ENCODE measurements at regions of chr6 and their contacts with region 1.

Region 1: GRCh38 chr6:52653151-52653550 is 17.8 kb upstream of the TMEM14A start:
- DNase-seq: no peak
- H3K4me3 ChIP-seq: no peak overlapping the region
- H3K4me3 Mint-ChIP-seq: no peak overlapping the region
- H3K27ac ChIP-seq: no peak overlapping the region
- H3K27ac Mint-ChIP-seq: peak overlapping the region in 1 of 7 donors; percentile 53
- H3K4me1 ChIP-seq: no peaks in the 10 kb centered on the region
- H3K4me1 Mint-ChIP-seq: peaks cover 3 to 9% (median 4%) of the 10 kb centered on the region in 4 donors
- H3K27me3 ChIP-seq: peaks cover 6% of the 10 kb centered on the region
- H3K27me3 Mint-ChIP-seq: peaks cover 15 to 18% of the 10 kb centered on the region in 2 donors

Region 2: DNA sequence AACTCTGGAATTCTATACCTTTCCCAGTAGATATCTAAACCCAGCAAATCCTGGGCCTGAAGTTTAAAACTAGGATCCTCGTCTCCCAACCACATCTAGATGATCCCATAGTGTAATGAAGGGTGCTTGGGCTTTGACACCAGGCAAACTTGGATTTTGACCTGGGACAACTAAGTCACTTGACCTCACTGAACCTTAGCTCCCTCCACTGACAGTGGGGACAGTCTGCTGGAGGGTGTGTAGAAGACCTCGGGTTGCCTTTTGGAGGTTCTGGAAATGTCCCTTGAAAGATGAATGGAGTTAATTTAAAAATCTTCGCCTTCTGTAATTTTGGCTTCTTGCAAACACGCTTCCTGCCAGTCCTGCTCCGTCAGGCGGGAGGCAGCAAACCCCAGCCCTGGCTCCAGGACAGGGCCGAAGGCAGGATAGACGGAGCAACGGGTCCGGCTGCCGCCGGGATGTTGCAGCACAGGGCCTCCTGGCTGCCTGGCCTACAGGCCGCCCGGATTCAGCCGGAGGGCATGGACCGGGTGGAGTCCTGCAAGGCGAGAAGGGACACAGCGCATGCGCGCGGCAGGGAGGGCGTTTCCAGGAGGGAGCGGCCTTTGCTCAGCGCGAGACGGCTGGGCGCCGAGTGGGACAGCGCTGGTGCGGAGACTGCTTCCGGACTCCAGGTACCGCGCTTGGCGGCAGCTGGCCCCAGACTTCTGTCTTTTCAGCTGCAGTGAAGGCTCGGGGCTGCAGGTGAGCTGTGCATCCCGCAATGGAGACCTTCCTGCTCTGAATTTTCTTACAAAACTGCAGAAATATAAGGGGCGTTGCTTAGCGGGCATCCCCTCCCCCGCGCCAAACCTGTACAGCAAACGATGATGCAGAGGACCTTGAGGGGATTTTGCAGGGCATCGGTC is 17.6 kb after region 1 on chr6 and contains the start of gene TMEM14A:
- CTCF ChIA-PET with region 1: interaction called, 25 read pairs
- POLR2A ChIA-PET with region 1: no interaction called
- intact Hi-C with region 1: loop called (anchors 2 kb)
- DNase-seq: peak; percentile 89 to 90 (median 89)
- H3K4me3 ChIP-seq: peak within 1 kb of the TSS; percentile 37 to 84
- H3K4me3 Mint-ChIP-seq: peak within 1 kb of the TSS; percentile 89 to 95 (median 92)
- H3K27ac ChIP-seq: peak within 1 kb of the TSS; percentile 50
- H3K27ac Mint-ChIP-seq: peak within 1 kb of the TSS; percentile 2 to 97 (median 89)
- H3K4me1 ChIP-seq: peaks cover 25% of the 10 kb centered on the region
- H3K4me1 Mint-ChIP-seq: peaks cover 23 to 32% (median 27%) of the 10 kb centered on the region in 4 donors
- H3K27me3 ChIP-seq: no peaks in the 10 kb centered on the region
- H3K27me3 Mint-ChIP-seq: peaks cover 0 to 2% of the 10 kb centered on the region in 2 donors
- total RNA-seq, gene TMEM14A: 9.5 to 10.0 TPM

Region 3: DNA sequence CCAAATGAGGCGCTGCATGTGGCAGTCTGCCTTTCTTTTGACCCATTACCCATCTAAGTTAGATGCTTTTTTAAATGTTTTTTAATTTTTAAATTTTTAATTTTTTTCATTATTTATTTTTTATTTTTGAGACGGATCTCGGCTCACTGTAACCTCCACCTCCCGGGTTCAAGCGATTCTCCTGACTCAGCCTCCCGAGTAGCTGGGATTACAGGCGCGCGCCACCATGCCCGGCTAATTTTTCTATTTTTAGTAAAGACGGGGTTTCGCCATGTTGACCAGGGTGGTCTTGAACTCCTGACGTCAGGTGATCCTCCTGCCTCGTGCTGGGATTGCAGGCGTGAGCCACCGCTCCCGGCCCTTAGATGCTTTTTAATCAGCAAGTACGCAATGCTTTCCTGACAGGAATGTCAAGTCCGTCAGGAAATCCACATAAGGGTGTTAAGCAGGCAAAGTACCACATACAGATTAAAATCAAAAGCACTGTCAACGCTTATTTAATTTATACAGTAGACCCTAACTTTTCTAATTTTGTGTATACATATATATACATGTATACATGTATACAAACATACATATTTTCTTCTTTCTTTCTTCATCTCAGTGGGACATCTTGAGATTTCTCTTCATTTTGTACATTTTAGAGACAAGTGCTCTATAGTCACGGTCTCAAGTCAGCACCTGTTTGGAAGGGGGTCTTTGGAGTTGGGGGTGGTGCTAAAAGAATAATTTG is 342.9 kb after region 1 on chr6:
- CTCF ChIA-PET with region 1: no interaction called
- POLR2A ChIA-PET with region 1: no interaction called
- intact Hi-C with region 1: no loop called
- DNase-seq: peak in 4 of 5 donors; percentile 36 to 42 (median 39)
- H3K4me3 ChIP-seq: peak overlapping the region; percentile 4 to 59
- H3K4me3 Mint-ChIP-seq: peak overlapping the region; percentile 92 to 99 (median 94)
- H3K27ac ChIP-seq: no peak overlapping the region
- H3K27ac Mint-ChIP-seq: peak overlapping the region; percentile 95 to 100 (median 100)
- H3K4me1 ChIP-seq: peaks cover 22% of the 10 kb centered on the region
- H3K4me1 Mint-ChIP-seq: peaks cover 9 to 29% (median 20%) of the 10 kb centered on the region in 4 donors
- H3K27me3 ChIP-seq: no peaks in the 10 kb centered on the region
- H3K27me3 Mint-ChIP-seq: peaks cover 4 to 8% of the 10 kb centered on the region in 2 donors

Measured in CD4-positive, alpha-beta memory T cell (primary cell).